Heart left ventricle (tissue), 16 donors: ENCODE measurements at regions of chr15 and their contacts with region 1.

Region 1: GRCh38 chr15:60916679-60917460 is 312.2 kb downstream of the RORA start:
- DNase-seq: peak; percentile 84 to 91 (median 86)
- ATAC-seq: peak; percentile 83 to 91 (median 86)
- H3K4me3 ChIP-seq: peak overlapping the region in 6 of 12 donors; percentile 1 to 30 (median 10)
- H3K27ac ChIP-seq: peak overlapping the region; percentile 10 to 82 (median 53)
- H3K4me1 ChIP-seq: peaks cover 0 to 39% (median 20%) of the 10 kb centered on the region in 12 donors
- H3K27me3 ChIP-seq: no peaks in the 10 kb centered on the region
- CTCF ChIP-seq: peak; percentile 73 to 91 (median 86)
- POLR2A ChIP-seq: no peak

Region 2: DNA sequence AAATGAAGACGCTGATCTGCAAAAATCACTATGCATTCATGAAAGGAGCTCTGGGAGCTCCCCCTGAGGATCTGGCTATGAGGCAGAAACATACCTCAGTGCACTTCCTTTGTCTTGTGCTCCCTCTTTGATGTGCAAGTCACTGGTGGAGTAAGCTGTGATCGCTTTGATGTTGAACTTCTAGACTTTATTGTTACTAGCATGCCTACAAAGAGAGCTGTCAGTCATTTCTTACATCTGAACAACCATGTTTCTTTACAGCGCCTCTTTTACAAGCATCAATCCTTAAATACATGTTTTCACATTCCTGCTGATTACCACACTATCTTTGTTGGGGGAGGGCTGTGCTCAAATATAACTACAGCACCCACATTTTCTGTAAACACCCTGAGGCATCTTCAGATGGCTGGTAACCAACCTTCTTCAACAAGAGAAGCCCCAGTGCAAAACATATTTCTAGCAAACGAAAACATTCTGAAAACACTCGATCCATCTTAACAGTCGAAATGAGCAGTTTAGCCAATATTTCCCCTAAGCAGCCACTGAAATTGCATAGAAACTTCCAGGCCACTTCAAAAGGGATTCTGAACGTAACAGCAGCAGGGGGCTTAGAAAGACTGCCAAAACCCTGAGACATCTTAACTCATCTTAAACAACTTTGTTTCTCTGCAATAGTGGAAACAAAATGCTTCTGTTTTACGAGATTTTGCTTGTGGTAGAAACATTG is 336.1 kb before region 1 on chr15:
- intact Hi-C with region 1: loop called in 9 of 10 experiments (anchors 1 to 5 kb)
- DNase-seq: no peak
- ATAC-seq: no peak
- H3K4me3 ChIP-seq: no peak overlapping the region
- H3K27ac ChIP-seq: peak overlapping the region in 1 of 12 donors; percentile 65
- H3K4me1 ChIP-seq: peaks cover 0 to 69% (median 16%) of the 10 kb centered on the region in 12 donors
- H3K27me3 ChIP-seq: no peaks in the 10 kb centered on the region
- CTCF ChIP-seq: no peak
- POLR2A ChIP-seq: no peak

Region 3: GRCh38 chr15:60592371-60593169 is 324.3 kb before region 1 on chr15:
- intact Hi-C with region 1: loop called in 7 of 10 experiments (anchors 2 kb)
- DNase-seq: peak; percentile 89 to 92 (median 90)
- ATAC-seq: peak; percentile 92 to 95 (median 94)
- H3K4me3 ChIP-seq: peak overlapping the region; percentile 68 to 95 (median 86)
- H3K27ac ChIP-seq: peak overlapping the region; percentile 85 to 95 (median 92)
- H3K4me1 ChIP-seq: peaks cover 0 to 30% (median 11%) of the 10 kb centered on the region in 12 donors
- H3K27me3 ChIP-seq: peaks cover 0 to 9% (median 0%) of the 10 kb centered on the region in 9 donors
- CTCF ChIP-seq: peak in 2 of 12 donors; percentile 10 to 38
- POLR2A ChIP-seq: peak in 1 of 2 donors; percentile 76

Region 4: GRCh38 chr15:61051569-61052031 is 134.7 kb after region 1 on chr15:
- intact Hi-C with region 1: loop called in 8 of 10 experiments (anchors 5 to 10 kb)
- DNase-seq: peak in 4 of 5 donors; percentile 37 to 44 (median 43)
- ATAC-seq: peak; percentile 79 to 92 (median 91)
- H3K4me3 ChIP-seq: no peak overlapping the region
- H3K27ac ChIP-seq: no peak overlapping the region
- H3K4me1 ChIP-seq: peaks cover 0 to 12% (median 4%) of the 10 kb centered on the region in 12 donors
- H3K27me3 ChIP-seq: no peaks in the 10 kb centered on the region
- CTCF ChIP-seq: peak; percentile 31 to 76 (median 64)
- POLR2A ChIP-seq: no peak